Heart left ventricle (tissue), 16 donors: ENCODE measurements at regions of chr12 and their contacts with region 1.

Region 1: DNA sequence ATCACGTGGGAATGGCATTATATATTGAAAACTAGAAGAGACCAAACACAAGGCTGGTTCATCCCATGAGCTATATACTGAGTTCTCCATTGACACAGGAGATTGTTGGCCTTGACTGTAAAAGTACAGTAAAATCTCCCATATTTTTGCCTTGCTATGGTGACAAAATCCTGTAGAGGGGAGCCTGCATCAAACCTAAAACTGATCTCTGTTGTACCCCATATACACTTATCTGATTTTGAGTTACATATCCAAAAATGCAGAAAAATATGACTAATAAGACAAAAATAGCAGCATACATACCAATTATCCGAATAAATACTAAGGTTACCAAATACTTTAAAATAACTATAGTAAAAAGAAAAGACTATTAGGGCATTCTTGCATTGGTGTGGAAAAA is 60.4 kb downstream of the TMTC3 start:
- DNase-seq: no peak
- ATAC-seq: no peak
- H3K4me3 ChIP-seq: no peak overlapping the region
- H3K27ac ChIP-seq: no peak overlapping the region
- H3K4me1 ChIP-seq: no peaks in the 10 kb centered on the region
- H3K27me3 ChIP-seq: no peaks in the 10 kb centered on the region
- CTCF ChIP-seq: no peak
- POLR2A ChIP-seq: no peak

Region 2: DNA sequence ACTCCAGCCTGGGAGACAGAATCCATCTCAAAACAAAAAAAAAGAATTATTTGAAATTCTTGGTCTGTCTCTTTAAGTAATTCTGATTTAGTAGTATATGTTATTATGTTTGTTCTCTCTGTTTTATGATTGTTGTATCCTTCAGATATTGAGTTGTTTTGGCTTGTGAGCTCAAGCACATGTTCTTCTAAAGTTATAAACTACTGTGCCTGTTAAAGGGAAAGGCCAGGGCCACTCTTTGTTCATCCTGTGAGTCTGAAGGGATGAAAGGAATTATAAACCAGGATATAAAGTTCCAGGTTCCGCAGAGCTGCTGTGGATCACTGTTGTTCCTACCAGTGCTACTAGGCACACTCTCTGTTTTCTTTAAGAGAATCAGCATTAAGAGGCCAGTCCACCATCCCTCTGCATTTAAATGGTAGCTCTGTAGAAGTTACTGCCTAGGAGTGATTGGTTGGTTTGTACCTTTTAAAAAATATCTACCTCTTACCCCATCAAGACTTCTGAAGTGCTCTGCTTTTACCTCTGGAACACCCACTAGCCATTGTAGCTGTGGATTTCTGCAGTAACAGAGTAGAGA is 46.3 kb before region 1 on chr12:
- intact Hi-C with region 1: no loop called
- DNase-seq: no peak
- ATAC-seq: no peak
- H3K4me3 ChIP-seq: no peak overlapping the region
- H3K27ac ChIP-seq: no peak overlapping the region
- H3K4me1 ChIP-seq: no peaks in the 10 kb centered on the region
- H3K27me3 ChIP-seq: no peaks in the 10 kb centered on the region
- CTCF ChIP-seq: no peak
- POLR2A ChIP-seq: no peak

Region 3: DNA sequence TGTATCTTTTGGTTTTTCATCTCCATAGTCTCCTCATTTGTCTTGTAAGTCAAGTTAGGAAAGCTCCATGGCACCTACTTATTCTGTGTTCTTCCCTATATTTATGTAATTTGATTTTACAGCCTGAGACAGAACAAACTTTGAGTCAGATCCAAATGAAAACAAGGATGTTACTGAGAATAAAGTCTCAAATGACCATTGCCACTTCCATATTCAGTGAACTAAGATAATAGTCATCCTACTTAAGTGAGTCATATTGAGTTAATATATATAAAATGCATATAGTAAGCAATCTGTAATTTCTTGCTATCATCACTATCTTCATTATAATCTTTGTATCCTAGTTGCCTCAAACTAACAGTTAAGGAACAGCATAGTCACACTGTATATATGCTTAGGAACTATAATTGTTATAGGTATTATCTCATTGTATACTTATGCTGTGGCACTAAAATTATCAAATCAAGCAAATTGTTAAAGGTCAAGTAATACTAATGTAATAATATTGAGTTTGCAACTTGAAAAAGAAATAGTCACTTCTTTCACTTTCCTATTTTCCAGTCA is 29.6 kb before region 1 on chr12:
- intact Hi-C with region 1: loop called in 1 of 10 experiments (anchors 2 kb)
- DNase-seq: no peak
- ATAC-seq: no peak
- H3K4me3 ChIP-seq: no peak overlapping the region
- H3K27ac ChIP-seq: no peak overlapping the region
- H3K4me1 ChIP-seq: peaks cover 0 to 3% (median 0%) of the 10 kb centered on the region in 12 donors
- H3K27me3 ChIP-seq: no peaks in the 10 kb centered on the region
- CTCF ChIP-seq: no peak
- POLR2A ChIP-seq: no peak

Region 4: DNA sequence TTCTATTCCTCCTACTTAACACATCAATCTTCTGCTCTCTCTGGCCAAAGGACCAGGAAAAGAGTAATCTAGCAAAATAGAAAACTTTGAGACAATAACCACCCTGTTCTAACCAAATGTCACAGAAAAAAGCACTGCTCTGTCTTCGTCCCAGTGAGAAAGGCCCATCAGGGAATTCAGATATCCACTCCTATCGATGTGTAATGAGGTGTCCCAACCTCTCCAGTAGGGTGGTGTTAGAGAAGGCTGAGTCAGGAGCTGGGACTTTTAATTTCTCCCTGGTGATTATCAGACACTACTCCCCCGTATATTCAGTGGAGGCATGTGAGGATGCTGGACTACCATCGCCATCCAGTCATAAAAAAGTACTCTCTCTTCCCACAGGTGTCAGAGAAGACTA is 70.0 kb after region 1 on chr12:
- intact Hi-C with region 1: no loop called
- DNase-seq: no peak
- ATAC-seq: no peak
- H3K4me3 ChIP-seq: no peak overlapping the region
- H3K27ac ChIP-seq: no peak overlapping the region
- H3K4me1 ChIP-seq: no peaks in the 10 kb centered on the region
- H3K27me3 ChIP-seq: no peaks in the 10 kb centered on the region
- CTCF ChIP-seq: no peak
- POLR2A ChIP-seq: no peak